Pancreas (tissue), 10 donors: ENCODE measurements at regions of chr15 and their contacts with region 1.

Region 1: DNA sequence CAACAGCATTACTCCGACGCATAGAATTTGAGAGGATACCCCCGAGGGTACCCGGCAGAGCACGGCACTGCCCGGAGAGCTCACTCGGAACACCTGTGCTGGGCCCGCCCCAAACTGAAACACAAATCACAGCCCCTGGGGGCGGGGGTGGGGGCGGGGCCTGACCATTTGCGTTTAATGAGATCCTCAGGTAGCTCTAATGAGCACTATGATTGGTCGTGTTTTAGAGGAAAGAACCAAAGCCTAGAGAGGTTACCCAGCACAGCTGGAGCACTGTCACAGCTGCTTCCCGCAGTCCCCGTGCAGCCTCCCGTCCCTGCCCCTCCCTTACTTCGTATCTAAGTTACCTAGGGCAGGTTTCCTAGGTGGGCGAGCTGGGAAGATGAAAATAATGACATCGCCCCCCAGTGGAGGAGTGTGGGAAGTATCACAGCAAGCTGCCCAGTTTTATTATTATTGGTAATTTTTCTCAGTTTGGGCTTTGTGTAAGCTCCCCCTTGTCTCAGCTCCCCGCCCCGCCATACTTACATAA is 187.1 kb downstream of the PDE8A start:
- DNase-seq: peak; percentile 58 to 81 (median 66)
- ATAC-seq: peak; percentile 97 to 98 (median 98)
- H3K4me3 ChIP-seq: peak overlapping the region; percentile 13 to 44 (median 26)
- H3K27ac ChIP-seq: no peak overlapping the region
- H3K4me1 ChIP-seq: no peaks in the 10 kb centered on the region
- H3K27me3 ChIP-seq: no peaks in the 10 kb centered on the region
- CTCF ChIP-seq: peak in 3 of 4 donors; percentile 9 to 40 (median 40)

Region 2: GRCh38 chr15:84961114-84961452 is 207.6 kb before region 1 on chr15:
- intact Hi-C with region 1: loop called in 1 of 3 experiments (anchors 5 kb)
- DNase-seq: no peak
- ATAC-seq: no peak
- H3K4me3 ChIP-seq: no peak overlapping the region
- H3K27ac ChIP-seq: no peak overlapping the region
- H3K4me1 ChIP-seq: no peaks in the 10 kb centered on the region
- H3K27me3 ChIP-seq: no peaks in the 10 kb centered on the region
- CTCF ChIP-seq: no peak

Region 3: DNA sequence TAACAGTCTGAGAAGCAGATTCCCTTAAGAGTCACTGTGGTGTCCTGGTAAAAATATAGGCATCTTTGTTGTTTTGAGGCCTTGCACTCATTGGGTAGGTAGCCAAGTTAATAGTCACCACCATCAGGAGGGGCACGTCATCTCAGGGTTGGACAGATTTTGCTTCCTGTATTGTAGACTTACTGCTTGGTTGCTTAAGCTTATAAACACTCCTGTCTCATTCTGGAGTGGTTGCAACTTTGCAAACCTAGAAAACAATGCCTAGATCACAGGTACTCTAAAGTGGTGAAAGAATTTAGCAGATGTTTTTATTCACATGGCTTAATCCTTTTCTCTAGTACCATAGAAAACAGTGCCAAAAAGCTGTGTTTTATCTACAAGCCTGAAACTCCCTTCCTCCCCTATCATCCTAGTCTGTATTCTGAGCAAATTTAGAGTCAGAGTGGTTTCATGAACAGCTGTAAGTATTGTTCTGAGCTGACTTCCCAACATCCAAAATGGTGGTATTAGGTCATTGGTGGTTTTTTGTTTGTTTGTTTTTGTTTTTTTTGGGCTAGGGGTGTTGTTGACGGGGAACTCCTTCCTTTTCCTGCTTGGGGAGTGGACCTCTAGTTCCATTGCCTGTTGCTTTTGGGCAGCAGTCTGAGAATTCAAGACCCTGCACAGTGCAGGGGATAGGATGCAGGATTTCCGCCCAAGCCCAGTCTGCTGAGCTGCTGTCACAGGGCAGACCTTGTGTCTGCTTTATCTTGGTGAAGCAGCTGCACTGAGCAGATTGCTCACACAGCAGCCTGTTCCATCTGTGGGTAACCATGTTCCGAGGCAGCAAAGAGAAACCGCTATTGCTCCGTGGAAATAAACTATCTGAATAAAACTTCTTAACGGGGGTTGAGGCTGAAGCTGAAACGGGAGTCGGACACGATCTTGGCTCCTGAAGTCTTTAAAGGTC is 413.7 kb after region 1 on chr15:
- intact Hi-C with region 1: no loop called
- DNase-seq: peak in 4 of 6 donors; percentile 55 to 73 (median 64)
- ATAC-seq: peak; percentile 32 to 56 (median 46)
- H3K4me3 ChIP-seq: peak overlapping the region; percentile 26 to 57 (median 45)
- H3K27ac ChIP-seq: peak overlapping the region; percentile 85 to 91 (median 90)
- H3K4me1 ChIP-seq: peaks cover 3 to 58% (median 26%) of the 10 kb centered on the region in 3 donors
- H3K27me3 ChIP-seq: no peaks in the 10 kb centered on the region
- CTCF ChIP-seq: no peak